ENCODE measurements at regions of chr5 and their contacts with region 1.

Region 1: GRCh38 chr5:132238169-132238744 is 10.6 kb upstream of the P4HA2 start:
- DNase-seq: peak; percentile 74
- H3K27ac ChIP-seq: no peak overlapping the region; the same call in 1 of the 2 replicates
- CTCF ChIP-seq: peak; percentile 95

Region 2: GRCh38 chr5:132227485-132228240 is 10.6 kb before region 1 on chr5 and contains the start of gene P4HA2:
- CTCF ChIA-PET with region 1: interaction called, 20 read pairs
- POLR2A ChIA-PET with region 1: no interaction called
- DNase-seq: peak; percentile 85
- H3K27ac ChIP-seq: peak within 1 kb of the TSS; percentile 96
- CTCF ChIP-seq: no peak

Region 3: GRCh38 chr5:132251220-132251725 is 13.0 kb after region 1 on chr5:
- CTCF ChIA-PET with region 1: interaction called, 12 read pairs
- POLR2A ChIA-PET with region 1: no interaction called
- DNase-seq: no peak
- H3K27ac ChIP-seq: peak overlapping the region; percentile 28; the same call in 1 of the 2 replicates
- CTCF ChIP-seq: no peak

Region 4: DNA sequence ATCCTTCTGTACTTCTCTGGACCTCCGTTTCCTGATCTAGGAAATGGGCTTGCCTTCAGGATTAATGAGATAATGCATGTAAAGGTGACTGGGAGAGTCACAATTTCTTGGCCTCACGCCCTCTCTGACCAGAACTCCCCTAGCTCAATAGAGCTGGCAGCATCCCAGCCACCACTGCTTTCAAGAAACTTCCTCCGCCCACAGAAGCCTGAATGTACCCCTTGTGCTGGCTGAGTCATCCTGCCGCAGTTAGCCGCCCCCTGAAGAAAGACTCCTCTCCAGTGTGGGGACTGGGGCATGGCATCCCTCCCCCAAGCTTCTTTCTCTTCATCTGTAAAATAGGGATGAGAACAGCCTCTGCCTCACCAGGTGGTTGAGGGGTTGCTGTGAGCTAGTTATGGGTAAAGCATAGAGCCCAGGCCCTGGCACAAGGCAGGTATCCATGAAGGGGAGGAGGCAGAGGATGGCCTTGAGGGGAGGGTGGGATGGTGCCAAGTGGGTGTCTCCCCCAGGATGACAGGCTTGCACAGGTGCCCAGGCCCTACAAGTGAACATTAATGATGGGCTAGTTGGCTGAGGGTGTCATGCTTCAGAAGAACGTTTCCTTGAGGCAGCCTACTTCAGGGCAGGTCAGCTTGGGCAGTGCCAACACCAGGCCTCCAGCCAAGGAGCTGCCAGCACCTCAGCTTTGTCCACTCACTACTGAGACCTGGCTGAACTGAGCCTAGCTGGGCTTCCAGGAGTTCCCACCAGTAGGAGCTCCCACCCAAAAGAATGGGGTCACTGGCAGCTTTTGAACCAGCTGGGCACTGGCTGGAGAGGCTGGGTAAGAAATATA is 22.7 kb after region 1 on chr5:
- CTCF ChIA-PET with region 1: interaction called, 20 read pairs
- POLR2A ChIA-PET with region 1: interaction called, 3 read pairs
- DNase-seq: peak; percentile 53
- H3K27ac ChIP-seq: peak overlapping the region; percentile 98
- CTCF ChIP-seq: no peak

Region 5: DNA sequence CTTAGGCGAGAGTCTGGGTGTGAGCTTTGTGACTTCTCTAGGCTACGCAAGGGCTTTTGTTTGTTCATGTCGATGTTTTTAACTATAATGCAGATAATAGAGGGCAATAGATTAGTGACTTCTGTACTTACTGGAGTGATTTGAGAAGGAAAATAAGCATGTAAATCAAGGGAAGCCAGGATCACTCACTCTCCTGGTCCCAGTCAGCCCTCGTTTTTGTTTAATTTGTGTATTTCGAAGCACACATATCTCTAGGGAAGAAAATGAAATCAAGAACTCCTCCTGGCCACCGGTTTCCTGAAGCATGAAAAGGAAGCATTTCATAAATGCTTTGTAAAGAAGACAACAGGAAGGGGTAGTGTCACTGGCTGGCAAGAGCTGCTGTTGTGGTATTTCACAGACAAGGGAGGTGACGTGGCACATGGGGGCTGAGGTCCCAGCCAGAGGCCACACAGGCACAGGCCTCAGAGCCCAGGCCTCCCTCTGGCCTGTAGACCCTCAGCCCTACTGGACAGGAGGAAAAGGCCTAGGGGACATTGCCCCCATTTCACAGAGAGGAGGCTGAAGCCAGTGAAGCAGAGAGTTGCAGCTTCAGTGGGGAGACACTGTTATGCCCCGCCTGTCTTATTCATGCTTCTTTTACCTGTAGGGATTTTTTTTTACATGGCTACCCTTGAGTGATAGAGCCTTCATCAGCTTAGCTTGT is 218.2 kb after region 1 on chr5:
- CTCF ChIA-PET with region 1: no interaction called
- POLR2A ChIA-PET with region 1: no interaction called
- DNase-seq: no peak
- H3K27ac ChIP-seq: peak overlapping the region; percentile 64
- CTCF ChIP-seq: no peak

Measured in RWPE1 (cell line).